CD4-positive, alpha-beta T cell (primary cell): ENCODE measurements at regions of chr19 and their contacts with region 1.

Region 1: DNA sequence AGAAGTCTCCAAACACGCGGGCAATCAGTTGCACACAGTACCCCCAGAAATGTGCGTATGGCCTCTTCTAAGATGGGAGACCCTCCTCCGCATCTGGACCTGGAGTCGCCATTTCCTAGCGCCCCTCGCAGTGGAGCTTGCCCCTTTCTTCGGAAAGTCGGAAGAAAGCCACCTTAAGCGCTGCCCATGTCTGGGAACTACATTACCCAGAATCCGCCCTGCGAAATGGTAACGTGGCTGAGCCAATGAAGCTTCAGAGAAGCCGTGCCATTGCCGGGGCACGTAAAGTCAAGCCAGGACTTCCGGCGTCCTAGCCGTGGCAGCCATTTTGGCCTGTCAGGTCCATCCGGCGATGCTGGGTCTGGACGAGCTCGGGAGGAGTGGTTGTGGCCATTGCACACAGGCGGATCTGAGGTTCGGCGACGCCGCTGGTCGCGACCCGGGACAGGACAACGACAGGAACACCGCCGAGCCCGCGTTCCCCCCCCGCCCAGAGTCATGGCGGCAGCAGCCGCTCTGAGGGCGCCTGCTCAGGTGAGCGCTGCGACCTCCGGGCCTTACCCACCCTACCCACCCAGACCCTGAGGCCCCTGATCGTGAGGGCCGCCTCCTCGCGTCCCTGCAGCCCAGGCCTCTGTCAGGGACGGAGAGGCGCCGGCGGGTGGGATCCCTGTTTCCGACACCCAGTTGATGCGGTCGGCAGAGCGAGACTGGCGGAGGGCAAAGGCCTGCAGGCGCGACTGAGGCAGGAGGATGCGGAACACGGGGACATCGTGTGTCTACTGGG is at the start of gene ZNF586:
- DNase-seq: peak; percentile 72 to 94 (median 81)
- ATAC-seq: peak; percentile 99
- H3K4me3 ChIP-seq: peak within 1 kb of the TSS; percentile 84
- H3K4me3 Mint-ChIP-seq: peak within 1 kb of the TSS; percentile 99
- H3K27ac ChIP-seq: peak within 1 kb of the TSS; percentile 73 to 75
- H3K27ac Mint-ChIP-seq: peak within 1 kb of the TSS; percentile 87
- H3K4me1 ChIP-seq: peaks cover 28% of the 10 kb centered on the region
- H3K4me1 Mint-ChIP-seq: peaks cover 39% of the 10 kb centered on the region
- H3K27me3 ChIP-seq: no peaks in the 10 kb centered on the region
- H3K27me3 Mint-ChIP-seq: no peaks in the 10 kb centered on the region
- CTCF ChIP-seq: no peak
- total RNA-seq, gene ZNF586: 51.1 to 53.4 TPM

Region 2: DNA sequence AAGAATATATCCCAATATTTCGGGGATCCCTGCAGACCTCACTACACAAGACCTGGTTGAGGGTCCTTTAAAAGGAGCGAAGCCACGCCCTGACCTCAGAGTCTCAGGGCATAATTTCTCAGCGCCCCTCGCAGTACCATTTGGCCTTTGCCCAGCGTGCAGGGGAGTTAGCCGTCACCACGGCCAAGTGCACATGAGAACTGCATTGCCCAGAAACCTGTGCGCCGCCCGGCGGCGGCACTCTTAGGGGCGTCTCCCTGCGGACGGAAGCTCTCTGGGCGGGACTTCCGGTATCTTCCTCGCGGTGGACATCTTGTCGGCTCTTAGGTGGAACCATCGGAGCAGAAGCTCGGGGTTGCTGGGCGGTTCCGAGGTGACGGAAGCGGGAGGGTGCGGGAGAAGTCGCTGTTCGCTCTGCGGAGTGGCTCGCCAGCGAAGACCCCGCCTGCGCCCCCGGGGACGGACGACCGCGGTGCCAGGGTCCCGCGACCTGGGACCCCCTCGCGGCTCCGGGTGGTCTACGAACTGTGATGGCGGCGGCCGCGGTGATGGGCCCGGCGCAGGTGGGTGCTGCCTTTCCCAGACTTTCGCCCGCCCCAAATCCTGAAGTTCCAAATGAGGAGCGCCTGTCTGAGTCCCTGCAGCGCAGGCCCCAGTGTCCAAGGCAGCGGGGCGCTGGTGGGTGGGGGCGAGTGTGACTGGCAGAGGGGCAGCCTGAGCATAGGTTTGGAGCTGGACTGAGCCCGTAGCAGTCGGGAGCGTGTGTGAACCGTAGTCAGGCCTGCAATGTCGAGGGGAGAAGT is 155.4 kb before region 1 on chr19 and contains the start of gene ZNF134:
- CTCF ChIA-PET with region 1: no interaction called
- POLR2A ChIA-PET with region 1: no interaction called
- intact Hi-C with region 1: loop called in 1 of 2 experiments (anchors 5 kb)
- DNase-seq: peak; percentile 82 to 96 (median 88)
- ATAC-seq: peak; percentile 99
- H3K4me3 ChIP-seq: peak within 1 kb of the TSS; percentile 94
- H3K4me3 Mint-ChIP-seq: peak within 1 kb of the TSS; percentile 95
- H3K27ac ChIP-seq: peak within 1 kb of the TSS; percentile 26 to 50
- H3K27ac Mint-ChIP-seq: peak within 1 kb of the TSS; percentile 82
- H3K4me1 ChIP-seq: peaks cover 26% of the 10 kb centered on the region
- H3K4me1 Mint-ChIP-seq: peaks cover 36% of the 10 kb centered on the region
- H3K27me3 ChIP-seq: no peaks in the 10 kb centered on the region
- H3K27me3 Mint-ChIP-seq: no peaks in the 10 kb centered on the region
- CTCF ChIP-seq: peak; percentile 25
- total RNA-seq, gene ZNF134: 24.6 to 25.7 TPM

Region 3: GRCh38 chr19:57682226-57682766 is 87.2 kb before region 1 on chr19:
- CTCF ChIA-PET with region 1: no interaction called
- POLR2A ChIA-PET with region 1: interaction called, 11 read pairs
- intact Hi-C with region 1: loop called in 1 of 2 experiments (anchors 5 kb)
- DNase-seq: no peak
- ATAC-seq: no peak
- H3K4me3 ChIP-seq: peak overlapping the region; percentile 81
- H3K4me3 Mint-ChIP-seq: peak overlapping the region; percentile 98
- H3K27ac ChIP-seq: peak overlapping the region; percentile 29 to 55
- H3K27ac Mint-ChIP-seq: peak overlapping the region; percentile 93
- H3K4me1 ChIP-seq: peaks cover 26% of the 10 kb centered on the region
- H3K4me1 Mint-ChIP-seq: peaks cover 43% of the 10 kb centered on the region
- H3K27me3 ChIP-seq: peaks cover 4 to 8% of the 10 kb centered on the region in 2 experiments
- H3K27me3 Mint-ChIP-seq: peaks cover 14% of the 10 kb centered on the region
- CTCF ChIP-seq: no peak

Region 4: GRCh38 chr19:57689750-57690149 is 79.8 kb before region 1 on chr19:
- CTCF ChIA-PET with region 1: interaction called, 5 read pairs
- POLR2A ChIA-PET with region 1: interaction called, 3 read pairs
- intact Hi-C with region 1: loop called in 1 of 2 experiments (anchors 5 kb)
- DNase-seq: no peak
- ATAC-seq: no peak
- H3K4me3 ChIP-seq: no peak overlapping the region
- H3K4me3 Mint-ChIP-seq: no peak overlapping the region
- H3K27ac ChIP-seq: no peak overlapping the region
- H3K27ac Mint-ChIP-seq: no peak overlapping the region
- H3K4me1 ChIP-seq: no peaks in the 10 kb centered on the region
- H3K4me1 Mint-ChIP-seq: peaks cover 7% of the 10 kb centered on the region
- H3K27me3 ChIP-seq: no peaks in the 10 kb centered on the region
- H3K27me3 Mint-ChIP-seq: no peaks in the 10 kb centered on the region
- CTCF ChIP-seq: no peak

Region 5: GRCh38 chr19:57746580-57747471 is 22.7 kb before region 1 on chr19 and contains the start of gene ZNF776:
- CTCF ChIA-PET with region 1: interaction called, 4 read pairs
- POLR2A ChIA-PET with region 1: interaction called, 19 read pairs
- intact Hi-C with region 1: loop called in 1 of 2 experiments (anchors 1 kb)
- DNase-seq: peak; percentile 65 to 94 (median 74)
- ATAC-seq: peak; percentile 97
- H3K4me3 ChIP-seq: peak within 1 kb of the TSS; percentile 83
- H3K4me3 Mint-ChIP-seq: peak within 1 kb of the TSS; percentile 94
- H3K27ac ChIP-seq: peak within 1 kb of the TSS; percentile 56 to 78
- H3K27ac Mint-ChIP-seq: peak within 1 kb of the TSS; percentile 90
- H3K4me1 ChIP-seq: peaks cover 22% of the 10 kb centered on the region
- H3K4me1 Mint-ChIP-seq: peaks cover 48% of the 10 kb centered on the region
- H3K27me3 ChIP-seq: no peaks in the 10 kb centered on the region
- H3K27me3 Mint-ChIP-seq: no peaks in the 10 kb centered on the region
- CTCF ChIP-seq: no peak
- total RNA-seq, gene ZNF776: 21.7 to 28.4 TPM

Region 6: DNA sequence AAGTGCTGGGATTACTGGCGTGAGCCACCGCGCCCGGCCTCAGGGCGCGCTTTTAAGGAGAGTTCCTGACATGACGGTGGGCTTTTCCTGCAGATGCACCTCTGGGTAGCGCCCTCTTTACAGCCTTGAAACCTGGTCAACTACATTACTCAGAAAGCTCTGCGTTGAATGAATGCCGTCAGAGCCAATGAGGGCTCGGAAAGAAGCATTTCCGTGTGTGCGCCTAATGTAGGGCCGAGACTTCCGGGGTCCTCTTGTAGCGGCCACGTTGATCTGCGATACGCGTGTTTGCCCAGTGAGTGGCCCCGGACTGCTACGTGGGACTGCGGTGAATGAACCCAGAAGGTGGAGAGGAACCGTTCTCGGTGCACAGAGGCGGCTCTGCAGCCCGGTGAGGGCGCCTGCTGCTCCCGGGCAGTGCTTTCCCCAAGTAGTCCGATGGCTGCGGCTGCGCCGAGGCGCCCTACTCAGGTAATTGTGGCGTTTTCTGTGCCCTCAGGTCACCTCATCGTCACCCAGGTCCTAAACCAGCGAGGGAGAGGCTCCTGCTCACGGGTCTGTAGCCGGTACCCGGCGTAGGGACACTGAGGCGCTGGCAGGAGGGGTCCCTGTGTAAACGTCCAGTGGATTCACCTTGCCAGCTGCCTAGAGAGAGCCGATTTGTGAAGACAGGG is 50.1 kb after region 1 on chr19:
- CTCF ChIA-PET with region 1: interaction called, 10 read pairs
- POLR2A ChIA-PET with region 1: interaction called, 17 read pairs
- intact Hi-C with region 1: loop called (anchors 1 kb)
- DNase-seq: peak; percentile 64 to 95 (median 73)
- ATAC-seq: peak; percentile 83
- H3K4me3 ChIP-seq: peak overlapping the region; percentile 98
- H3K4me3 Mint-ChIP-seq: peak overlapping the region; percentile 96
- H3K27ac ChIP-seq: peak overlapping the region; percentile 78 to 90
- H3K27ac Mint-ChIP-seq: peak overlapping the region; percentile 92
- H3K4me1 ChIP-seq: peaks cover 29% of the 10 kb centered on the region
- H3K4me1 Mint-ChIP-seq: peaks cover 56% of the 10 kb centered on the region
- H3K27me3 ChIP-seq: no peaks in the 10 kb centered on the region
- H3K27me3 Mint-ChIP-seq: no peaks in the 10 kb centered on the region
- CTCF ChIP-seq: peak; percentile 34

Region 7: DNA sequence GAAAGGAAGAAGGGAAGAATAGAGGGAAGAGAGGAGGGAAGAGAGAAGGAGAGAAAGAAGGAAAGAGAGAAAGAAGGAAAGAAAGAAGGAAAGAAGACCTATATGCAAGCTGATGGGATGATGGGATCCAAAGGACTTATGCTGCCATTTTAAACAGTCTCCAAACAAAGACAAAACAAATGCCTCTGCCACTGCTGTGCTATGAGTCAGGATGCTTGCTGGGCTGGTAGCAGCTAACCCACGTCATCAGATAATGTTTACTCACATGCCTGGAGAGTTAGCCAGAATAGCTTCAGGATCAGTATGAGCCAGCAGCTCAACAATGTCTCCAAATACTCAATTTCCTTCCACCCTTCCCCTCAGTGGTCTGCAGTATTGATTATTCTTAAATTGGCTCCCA is 401.3 kb after region 1 on chr19:
- CTCF ChIA-PET with region 1: no interaction called
- POLR2A ChIA-PET with region 1: no interaction called
- intact Hi-C with region 1: no loop called
- DNase-seq: no peak
- ATAC-seq: no peak
- H3K4me3 ChIP-seq: no peak overlapping the region
- H3K4me3 Mint-ChIP-seq: no peak overlapping the region
- H3K27ac ChIP-seq: no peak overlapping the region
- H3K27ac Mint-ChIP-seq: no peak overlapping the region
- H3K4me1 ChIP-seq: no peaks in the 10 kb centered on the region
- H3K4me1 Mint-ChIP-seq: no peaks in the 10 kb centered on the region
- H3K27me3 ChIP-seq: no peaks in the 10 kb centered on the region
- H3K27me3 Mint-ChIP-seq: no peaks in the 10 kb centered on the region
- CTCF ChIP-seq: no peak